Left cardiac atrium (tissue), 4 donors: ENCODE measurements at regions of chrX and their contacts with region 1.

Region 1: GRCh38 chrX:47030339-47030738 is 47.9 kb upstream of the RGN start:
- DNase-seq: no peak
- ATAC-seq: no peak

Region 2: DNA sequence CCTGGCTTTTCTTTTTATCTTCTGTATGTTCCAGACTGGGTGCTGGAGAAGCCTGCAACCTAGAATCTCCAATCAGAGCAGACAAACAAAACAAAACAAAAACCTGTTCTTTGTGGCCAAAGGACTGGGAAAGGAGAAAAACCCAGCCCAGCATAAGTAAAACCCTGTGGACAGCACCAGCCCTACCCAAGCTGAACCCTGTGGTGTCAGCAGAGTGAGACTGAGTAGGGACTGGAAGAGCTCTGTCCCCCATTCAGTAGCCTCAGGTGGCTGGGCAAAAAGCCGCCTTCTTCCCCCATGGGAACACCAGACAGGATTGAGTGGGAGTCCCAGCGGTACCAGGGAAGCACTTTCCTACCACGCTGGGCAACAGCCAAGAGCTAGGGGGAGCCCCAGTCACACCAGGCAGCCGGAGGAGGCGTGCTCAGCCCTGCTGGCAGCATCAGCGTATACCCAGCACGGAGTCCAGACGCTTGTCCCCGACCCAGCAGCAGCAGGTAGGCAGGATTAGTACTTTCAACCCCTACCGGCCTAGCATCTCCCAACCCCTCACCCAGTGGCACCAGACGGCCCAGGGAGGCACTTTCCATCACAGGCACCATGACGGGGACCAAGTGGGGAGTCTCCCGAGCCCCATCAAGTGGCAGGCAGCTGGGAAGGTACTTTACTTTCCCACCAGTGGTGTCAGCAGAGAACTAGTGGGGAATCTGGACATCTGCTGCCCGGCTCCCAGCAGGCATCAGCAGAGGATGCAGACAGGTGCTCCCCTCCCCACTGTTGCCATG is 126.7 kb before region 1 on chrX:
- intact Hi-C with region 1: loop called in 1 of 2 experiments (anchors 5 kb)
- DNase-seq: peak; percentile 86
- ATAC-seq: peak; percentile 96 to 100